ENCODE measurements at regions of chr12 and their contacts with region 1.

Region 1: DNA sequence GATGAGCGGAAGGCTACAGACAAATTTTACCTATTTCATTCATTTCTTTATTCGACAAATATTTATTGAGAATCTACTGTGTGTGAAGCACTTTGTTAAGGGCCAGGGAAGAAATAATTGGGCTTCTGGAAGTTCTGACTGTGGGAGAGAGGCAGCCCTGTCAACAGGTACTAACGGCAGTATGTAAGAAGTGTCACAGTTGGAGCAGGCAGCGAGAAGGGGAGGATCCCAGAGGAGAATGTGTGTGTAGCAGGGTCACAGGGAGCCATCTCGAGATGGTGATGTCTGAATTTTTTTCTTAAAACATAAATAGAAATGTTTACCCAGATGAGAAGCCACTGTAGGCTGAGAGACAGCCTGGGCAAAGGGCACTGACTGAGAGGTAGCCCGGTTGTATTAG is 163.3 kb upstream of the SLC38A2 start:
- DNase-seq: no peak
- ATAC-seq: no peak
- H3K4me3 ChIP-seq: no peak overlapping the region
- H3K27ac ChIP-seq: peak overlapping the region; percentile 37 to 89 (median 83)
- H3K4me1 ChIP-seq: peaks cover 38 to 50% of the 10 kb centered on the region in 2 donors
- H3K27me3 ChIP-seq: no peaks in the 10 kb centered on the region
- CTCF ChIP-seq: no peak
- POLR2A ChIP-seq: no peak

Region 2: GRCh38 chr12:45500157-45500556 is 1035.8 kb before region 1 on chr12:
- in situ Hi-C with region 1: no loop called
- intact Hi-C with region 1: no loop called
- DNase-seq: no peak
- ATAC-seq: no peak
- H3K4me3 ChIP-seq: no peak overlapping the region
- H3K27ac ChIP-seq: no peak overlapping the region
- H3K4me1 ChIP-seq: no peaks in the 10 kb centered on the region
- H3K27me3 ChIP-seq: no peaks in the 10 kb centered on the region
- CTCF ChIP-seq: no peak
- POLR2A ChIP-seq: no peak

Region 3: DNA sequence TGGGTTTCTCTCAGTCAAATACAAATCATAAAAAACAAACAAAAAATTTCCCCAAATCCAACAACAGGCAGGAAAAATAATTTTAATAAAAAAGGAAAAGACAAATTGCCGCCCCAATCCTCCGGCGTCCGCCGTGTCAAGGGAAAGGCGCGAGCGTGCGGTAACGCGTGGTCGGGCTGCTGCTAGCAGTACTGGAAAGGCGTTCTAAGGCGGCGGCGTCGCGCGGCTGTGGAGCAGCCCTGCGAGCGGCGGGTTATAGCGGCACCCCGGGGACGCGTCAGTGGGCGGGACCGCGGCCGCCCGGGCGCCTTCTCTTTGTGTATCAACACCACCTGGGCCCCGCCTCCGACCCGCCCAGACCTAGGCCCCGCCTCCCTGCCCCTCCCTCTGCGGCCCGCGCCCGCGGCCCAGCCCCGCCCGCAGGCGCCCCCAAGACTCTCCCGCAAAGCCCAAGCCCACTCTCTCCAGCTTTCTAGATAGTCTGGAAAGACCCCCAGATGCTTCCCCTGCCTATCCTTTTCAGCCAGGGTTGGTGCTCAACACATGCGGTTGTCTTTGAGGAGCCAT is 163.3 kb before region 1 on chr12 and contains the start of gene SLC38A2:
- in situ Hi-C with region 1: no loop called
- intact Hi-C with region 1: loop called (anchors 5 kb)
- DNase-seq: peak; percentile 97 to 98
- ATAC-seq: peak; percentile 69 to 71
- H3K4me3 ChIP-seq: peak within 1 kb of the TSS; percentile 68 to 87 (median 80)
- H3K27ac ChIP-seq: peak within 1 kb of the TSS; percentile 93 to 97 (median 95)
- H3K4me1 ChIP-seq: peaks cover 38 to 46% of the 10 kb centered on the region in 2 donors
- H3K27me3 ChIP-seq: no peaks in the 10 kb centered on the region
- CTCF ChIP-seq: no peak
- POLR2A ChIP-seq: peak; percentile 100
- total RNA-seq, gene SLC38A2: 260 to 853 (median 400) TPM

Region 4: GRCh38 chr12:46473634-46474329 is 62.1 kb before region 1 on chr12:
- in situ Hi-C with region 1: no loop called
- intact Hi-C with region 1: loop called (anchors 5 kb)
- DNase-seq: peak; percentile 4 to 49
- ATAC-seq: peak; percentile 66 to 69
- H3K4me3 ChIP-seq: peak overlapping the region in 3 of 4 donors; percentile 4 to 23 (median 10)
- H3K27ac ChIP-seq: peak overlapping the region; percentile 75 to 80 (median 78)
- H3K4me1 ChIP-seq: peaks cover 37 to 41% of the 10 kb centered on the region in 2 donors
- H3K27me3 ChIP-seq: no peaks in the 10 kb centered on the region
- CTCF ChIP-seq: no peak
- POLR2A ChIP-seq: no peak

Region 5: GRCh38 chr12:46562625-46563228 is 26.8 kb after region 1 on chr12:
- in situ Hi-C with region 1: no loop called
- intact Hi-C with region 1: loop called (anchors 2 kb)
- DNase-seq: no peak
- ATAC-seq: peak; percentile 62 to 67
- H3K4me3 ChIP-seq: peak overlapping the region in 2 of 4 donors; percentile 3 to 12
- H3K27ac ChIP-seq: peak overlapping the region; percentile 68 to 90 (median 80)
- H3K4me1 ChIP-seq: peaks cover 40 to 47% of the 10 kb centered on the region in 2 donors
- H3K27me3 ChIP-seq: no peaks in the 10 kb centered on the region
- CTCF ChIP-seq: no peak
- POLR2A ChIP-seq: no peak

Region 6: GRCh38 chr12:46627686-46628085 is 91.8 kb after region 1 on chr12:
- in situ Hi-C with region 1: no loop called
- intact Hi-C with region 1: loop called (anchors 5 kb)
- DNase-seq: no peak
- ATAC-seq: no peak
- H3K4me3 ChIP-seq: no peak overlapping the region
- H3K27ac ChIP-seq: peak overlapping the region; percentile 44 to 85 (median 64)
- H3K4me1 ChIP-seq: peaks cover 15 to 20% of the 10 kb centered on the region in 2 donors
- H3K27me3 ChIP-seq: no peaks in the 10 kb centered on the region
- CTCF ChIP-seq: no peak
- POLR2A ChIP-seq: no peak